ENCODE measurements at regions of chr5 and their contacts with region 1.

Region 1: GRCh38 chr5:146291421-146292074 is 47.1 kb upstream of the POU4F3 start:
- DNase-seq: peak in 2 of 5 donors; percentile 73 to 81
- H3K4me3 ChIP-seq: no peak overlapping the region
- H3K27ac ChIP-seq: no peak overlapping the region
- H3K4me1 ChIP-seq: no peaks in the 10 kb centered on the region
- H3K27me3 ChIP-seq: no peaks in the 10 kb centered on the region
- CTCF ChIP-seq: peak; percentile 44

Region 2: DNA sequence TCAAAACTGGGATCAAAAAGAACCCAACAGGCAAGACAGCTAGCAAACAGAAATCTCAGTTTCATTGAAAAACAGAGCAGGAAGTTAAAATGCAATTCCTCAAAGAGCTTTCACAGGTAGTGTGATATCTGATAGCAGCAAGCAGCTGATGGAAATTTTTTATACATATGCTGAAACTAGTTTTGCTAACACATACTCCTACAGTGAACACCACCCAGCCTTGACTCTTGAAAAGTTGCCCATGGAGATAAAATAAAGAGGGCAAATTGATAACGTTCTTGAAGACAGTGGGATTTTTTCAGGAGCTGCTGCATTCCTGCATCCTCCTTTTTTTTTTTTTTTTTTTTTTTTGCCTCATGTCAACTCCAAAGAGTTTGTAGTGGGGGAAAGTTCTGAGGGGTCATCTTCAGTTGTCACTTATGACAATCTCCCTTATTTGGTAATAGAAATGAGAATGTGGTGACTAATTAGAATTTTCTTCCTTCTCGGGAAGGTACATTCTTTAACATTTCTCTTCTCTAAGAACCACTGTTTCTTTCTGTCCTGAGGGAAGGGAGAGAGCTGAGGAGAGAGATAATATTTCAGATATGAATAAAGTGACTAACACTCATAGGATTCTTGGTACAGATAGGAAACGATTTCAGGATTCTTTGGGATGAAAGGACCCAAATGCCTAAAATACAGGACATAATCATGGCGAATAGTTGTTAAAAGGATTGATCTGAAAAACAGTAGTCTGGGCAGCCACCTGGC is 330.5 kb before region 1 on chr5:
- intact Hi-C with region 1: no loop called
- DNase-seq: no peak
- H3K4me3 ChIP-seq: no peak overlapping the region
- H3K27ac ChIP-seq: no peak overlapping the region
- H3K4me1 ChIP-seq: no peaks in the 10 kb centered on the region
- H3K27me3 ChIP-seq: no peaks in the 10 kb centered on the region
- CTCF ChIP-seq: no peak

Region 3: DNA sequence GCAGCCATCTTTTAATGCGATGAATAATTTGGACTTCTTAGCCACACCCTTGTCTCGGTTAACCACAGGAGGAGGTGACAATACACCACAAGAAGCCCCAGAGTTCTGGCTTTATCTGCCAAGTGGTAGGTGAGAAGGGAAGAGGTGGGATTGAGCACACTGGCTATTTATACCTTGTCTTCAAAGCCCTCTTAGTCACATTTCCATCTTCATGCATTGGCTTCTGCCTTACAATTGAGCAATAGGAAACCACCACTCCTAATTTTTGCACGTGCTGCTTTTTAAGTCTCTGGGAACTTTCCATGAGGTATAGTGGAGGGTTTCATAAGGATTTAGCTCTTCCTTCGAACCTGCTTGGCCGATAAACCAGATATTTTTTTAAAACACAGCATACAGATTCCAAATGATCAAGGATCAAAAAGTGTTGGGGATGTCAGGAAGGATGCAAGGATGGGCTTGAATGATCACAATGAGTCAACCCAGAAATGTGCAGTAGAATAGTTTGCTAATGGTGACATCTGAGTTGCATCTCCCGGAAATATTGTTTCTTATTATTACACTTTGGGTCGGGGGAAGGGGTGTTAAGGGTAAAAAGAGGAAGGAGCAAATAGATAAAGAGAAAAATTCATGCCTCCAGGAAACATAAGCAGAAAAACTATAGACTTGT is 211.7 kb before region 1 on chr5:
- intact Hi-C with region 1: no loop called
- DNase-seq: no peak
- H3K4me3 ChIP-seq: no peak overlapping the region
- H3K27ac ChIP-seq: no peak overlapping the region
- H3K4me1 ChIP-seq: no peaks in the 10 kb centered on the region
- H3K27me3 ChIP-seq: no peaks in the 10 kb centered on the region
- CTCF ChIP-seq: no peak

Region 4: DNA sequence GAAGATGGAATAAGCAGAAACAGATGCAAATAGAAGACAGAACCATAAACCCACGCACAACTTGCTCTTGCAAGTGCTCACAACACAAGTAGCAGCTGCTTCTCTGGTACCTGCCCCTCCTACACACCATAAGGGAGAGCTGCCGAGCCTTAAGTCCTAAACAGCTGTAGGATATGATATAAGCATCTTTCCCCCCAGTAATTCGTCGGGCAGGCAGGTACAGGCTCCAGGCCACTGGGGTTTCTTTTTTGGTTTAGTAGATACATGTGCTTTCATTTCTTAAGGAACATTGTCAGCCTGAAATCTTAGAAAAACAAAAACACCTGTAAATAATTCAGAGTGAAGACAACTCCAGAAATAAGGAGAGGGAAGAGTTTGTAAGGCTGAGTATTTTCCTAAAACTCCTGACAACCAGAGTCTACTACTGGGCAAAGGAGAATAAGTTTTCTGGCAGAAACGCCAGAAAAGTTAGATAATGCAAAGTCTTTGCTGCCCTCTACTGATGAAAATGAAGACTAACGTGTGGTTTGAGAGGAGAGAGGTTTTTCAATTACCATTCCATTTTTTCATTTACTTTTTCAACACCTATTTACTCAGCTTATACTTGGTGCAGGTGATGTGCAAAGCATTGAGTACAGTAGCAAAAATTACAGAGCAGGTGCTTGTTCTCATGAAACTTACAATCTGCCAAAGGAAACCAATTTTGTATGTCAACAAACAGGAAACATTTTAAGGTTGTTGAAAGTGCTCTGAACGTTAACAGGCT is 135.5 kb after region 1 on chr5:
- intact Hi-C with region 1: loop called (anchors 5 kb)
- DNase-seq: peak in 2 of 5 donors; percentile 70 to 74
- H3K4me3 ChIP-seq: no peak overlapping the region
- H3K27ac ChIP-seq: no peak overlapping the region
- H3K4me1 ChIP-seq: no peaks in the 10 kb centered on the region
- H3K27me3 ChIP-seq: no peaks in the 10 kb centered on the region
- CTCF ChIP-seq: peak; percentile 64

Measured in kidney (tissue), 22 donors.